ENCODE measurements at regions of chrX and their contacts with region 1.

Region 1: GRCh38 chrX:53317365-53318069 is 36.1 kb upstream of the IQSEC2 start:
- DNase-seq: peak; percentile 41 to 68
- H3K4me3 ChIP-seq: no peak overlapping the region
- H3K27ac ChIP-seq: no peak overlapping the region
- H3K4me1 ChIP-seq: peaks cover 0 to 30% (median 12%) of the 10 kb centered on the region in 4 donors
- H3K27me3 ChIP-seq: no peaks in the 10 kb centered on the region
- CTCF ChIP-seq: peak; percentile 60 to 61

Region 2: DNA sequence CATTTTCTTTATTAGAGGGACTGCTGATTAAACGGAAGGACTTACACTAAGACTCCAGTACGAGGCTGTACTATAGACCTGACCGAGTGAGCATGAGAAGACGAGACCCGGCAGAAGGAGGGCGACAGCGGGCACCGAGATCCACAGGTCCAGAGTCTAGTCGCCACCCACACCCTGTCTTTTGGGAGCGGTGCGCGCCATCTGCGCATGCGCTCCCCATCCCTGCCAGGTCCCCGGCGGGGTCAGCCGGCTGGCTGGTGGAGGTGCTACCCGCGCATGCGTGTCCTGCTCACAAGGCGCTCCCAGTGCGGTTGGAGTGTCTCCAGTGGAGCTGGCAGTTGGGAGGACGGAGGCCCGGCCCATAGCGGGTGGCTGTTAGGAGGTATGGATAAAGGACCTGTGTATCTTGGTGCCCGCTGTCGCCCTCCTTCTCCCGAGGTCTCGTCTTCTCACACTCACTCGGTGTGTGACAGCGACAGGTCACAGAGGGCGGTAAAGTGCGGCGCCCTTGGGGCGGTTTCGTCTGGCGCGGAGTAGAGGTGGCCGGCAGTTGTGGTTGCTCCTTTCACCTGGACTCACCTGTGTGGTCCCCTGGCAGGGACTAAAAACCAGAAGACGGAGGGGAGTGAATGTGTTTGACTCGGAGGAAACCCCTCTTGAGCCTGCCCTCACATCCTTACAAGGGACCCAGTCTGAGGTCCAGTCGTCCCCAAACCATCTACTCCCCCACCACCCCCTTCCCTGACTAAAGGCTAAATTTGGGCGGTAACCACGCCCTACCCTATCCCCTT is 124.2 kb after region 1 on chrX:
- intact Hi-C with region 1: loop called (anchors 5 kb)
- DNase-seq: peak; percentile 59 to 86
- H3K4me3 ChIP-seq: peak overlapping the region; percentile 43 to 52
- H3K27ac ChIP-seq: peak overlapping the region; percentile 41 to 71
- H3K4me1 ChIP-seq: peaks cover 0 to 15% (median 6%) of the 10 kb centered on the region in 4 donors
- H3K27me3 ChIP-seq: no peaks in the 10 kb centered on the region
- CTCF ChIP-seq: no peak

Measured in tibial artery (tissue), 4 donors.